ENCODE measurements at regions of chr12 and their contacts with region 1.

Region 1: GRCh38 chr12:8823565-8824300 is 1.3 kb downstream of the A2ML1 start:
- DNase-seq: peak; percentile 24 to 68 (median 48)
- ATAC-seq: peak; percentile 88
- H3K4me3 ChIP-seq: no peak overlapping the region
- H3K27ac ChIP-seq: no peak overlapping the region
- H3K4me1 ChIP-seq: peaks cover 10 to 15% of the 10 kb centered on the region in 2 experiments; a peak in 4 of 5 replicates
- H3K27me3 ChIP-seq: no peaks in the 10 kb centered on the region
- CTCF ChIP-seq: peak; percentile 79 to 81 (median 79)
- EP300 ChIP-seq: no peak
- POLR2A ChIP-seq: no peak
- RAD21 ChIP-seq: peak; percentile 66 to 87

Region 2: GRCh38 chr12:8681041-8681902 is 142.5 kb before region 1 on chr12:
- CTCF ChIA-PET with region 1: no interaction called
- POLR2A ChIA-PET with region 1: no interaction called
- in situ Hi-C with region 1: loop called (anchors 5 kb)
- intact Hi-C with region 1: loop called (anchors 1 kb)
- DNase-seq: no peak
- ATAC-seq: no peak
- H3K4me3 ChIP-seq: no peak overlapping the region
- H3K27ac ChIP-seq: no peak overlapping the region
- H3K4me1 ChIP-seq: no peaks in the 10 kb centered on the region; a peak in 2 of 5 replicates
- H3K27me3 ChIP-seq: no peaks in the 10 kb centered on the region; a peak in 2 of 5 replicates
- CTCF ChIP-seq: no peak
- EP300 ChIP-seq: no peak
- POLR2A ChIP-seq: no peak
- RAD21 ChIP-seq: no peak

Region 3: DNA sequence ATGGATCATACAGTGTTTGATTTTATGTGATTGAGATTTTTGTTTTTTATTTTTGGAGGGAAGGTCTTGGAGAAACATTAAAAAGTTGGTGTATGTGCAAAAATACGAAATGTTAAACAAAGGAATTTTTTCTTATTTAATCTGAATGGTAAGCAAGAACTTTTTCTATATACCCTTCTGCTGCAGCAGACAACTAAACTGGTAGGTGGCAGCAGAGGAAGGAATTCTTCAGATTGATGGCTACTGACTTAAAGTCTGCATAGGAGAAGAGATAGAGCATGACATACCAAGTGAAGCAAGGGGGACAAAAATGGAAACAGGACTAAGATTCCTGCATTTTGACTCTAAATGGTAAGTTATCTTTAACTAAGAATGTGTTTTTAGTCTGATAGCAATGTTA is 43.3 kb before region 1 on chr12:
- CTCF ChIA-PET with region 1: no interaction called
- POLR2A ChIA-PET with region 1: no interaction called
- in situ Hi-C with region 1: no loop called
- intact Hi-C with region 1: loop called (anchors 2 kb)
- DNase-seq: peak; percentile 12 to 47 (median 22)
- ATAC-seq: peak; percentile 81
- H3K4me3 ChIP-seq: no peak overlapping the region
- H3K27ac ChIP-seq: no peak overlapping the region
- H3K4me1 ChIP-seq: peaks cover 0 to 3% of the 10 kb centered on the region in 2 experiments; a peak in 3 of 5 replicates
- H3K27me3 ChIP-seq: no peaks in the 10 kb centered on the region
- CTCF ChIP-seq: peak in 2 of 3 experiments; percentile 27 to 61; a peak in 2 of 6 replicates
- EP300 ChIP-seq: no peak
- POLR2A ChIP-seq: no peak
- RAD21 ChIP-seq: peak; percentile 57 to 58

Region 4: GRCh38 chr12:8834230-8834629 is 10.5 kb after region 1 on chr12:
- CTCF ChIA-PET with region 1: no interaction called
- POLR2A ChIA-PET with region 1: no interaction called
- in situ Hi-C with region 1: no loop called
- intact Hi-C with region 1: no loop called
- DNase-seq: no peak
- ATAC-seq: no peak
- H3K4me3 ChIP-seq: no peak overlapping the region
- H3K27ac ChIP-seq: no peak overlapping the region
- H3K4me1 ChIP-seq: peaks cover 2 to 6% of the 10 kb centered on the region in 2 experiments; a peak in 3 of 5 replicates
- H3K27me3 ChIP-seq: no peaks in the 10 kb centered on the region
- CTCF ChIP-seq: no peak
- EP300 ChIP-seq: no peak
- POLR2A ChIP-seq: no peak
- RAD21 ChIP-seq: no peak

Region 5: DNA sequence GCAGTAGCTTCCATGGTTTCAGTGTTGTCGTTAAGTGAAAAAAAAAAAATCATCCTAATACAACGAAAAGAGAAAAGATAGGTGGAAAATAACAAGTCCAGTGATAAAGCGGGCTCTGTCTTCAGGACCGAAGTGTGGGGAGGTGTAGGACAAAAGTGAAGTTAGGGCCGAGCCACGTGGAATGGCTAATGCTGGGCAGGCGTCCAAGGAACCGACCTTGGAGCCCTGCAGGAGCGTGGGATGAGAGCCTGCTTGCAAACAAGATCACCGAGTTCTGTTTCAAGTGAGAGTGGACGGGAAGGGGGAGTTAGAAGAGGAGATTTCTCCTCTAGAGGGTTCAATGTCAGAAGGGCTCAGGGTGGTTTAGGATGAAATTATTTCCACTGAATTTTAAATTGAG is 20.9 kb after region 1 on chr12:
- CTCF ChIA-PET with region 1: no interaction called
- POLR2A ChIA-PET with region 1: no interaction called
- in situ Hi-C with region 1: no loop called
- intact Hi-C with region 1: no loop called
- DNase-seq: peak in 3 of 4 experiments; percentile 23 to 66 (median 34)
- ATAC-seq: peak; percentile 60
- H3K4me3 ChIP-seq: no peak overlapping the region
- H3K27ac ChIP-seq: no peak overlapping the region
- H3K4me1 ChIP-seq: peaks cover 14 to 21% of the 10 kb centered on the region in 2 experiments
- H3K27me3 ChIP-seq: no peaks in the 10 kb centered on the region
- CTCF ChIP-seq: no peak
- EP300 ChIP-seq: no peak
- POLR2A ChIP-seq: no peak
- RAD21 ChIP-seq: no peak